K562 (cell line): ENCODE measurements at regions of chrX and their contacts with region 1.

Region 1: GRCh38 chrX:43557792-43558191 is 98.3 kb upstream of the MAOA start:
- DNase-seq: peak; percentile 38 to 62 (median 46)
- ATAC-seq: peak; percentile 66; the same call in 2 of the 3 replicates
- H3K4me3 ChIP-seq: no peak overlapping the region
- H3K27ac ChIP-seq: no peak overlapping the region
- H3K4me1 ChIP-seq: no peaks in the 10 kb centered on the region; a peak in 1 of 5 replicates
- H3K27me3 ChIP-seq: no peaks in the 10 kb centered on the region
- CTCF ChIP-seq: peak; percentile 43 to 71 (median 54); a peak in 4 of 6 replicates
- EP300 ChIP-seq: no peak
- POLR2A ChIP-seq: no peak
- RAD21 ChIP-seq: peak; percentile 67 to 76

Region 2: DNA sequence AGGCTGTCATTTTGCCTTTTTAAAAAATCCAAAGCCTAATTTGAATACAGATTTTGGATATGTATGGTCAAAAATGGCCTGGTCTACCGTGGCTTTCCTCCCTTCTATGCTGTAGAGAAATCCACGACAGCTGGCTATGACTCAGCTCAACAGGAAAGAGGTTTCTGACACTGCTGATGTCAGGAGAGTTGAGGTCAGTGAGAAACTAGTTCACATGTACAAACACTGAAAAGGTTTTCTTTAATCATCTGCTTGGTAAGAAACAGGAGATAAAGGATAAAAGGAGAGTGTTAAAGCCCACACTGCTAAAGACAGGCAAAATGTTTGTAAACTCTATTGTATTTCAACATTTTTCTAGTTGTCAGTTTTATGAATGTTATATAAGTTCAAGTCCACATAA is 1996.7 kb before region 1 on chrX:
- CTCF ChIA-PET with region 1: no interaction called
- POLR2A ChIA-PET with region 1: no interaction called
- in situ Hi-C with region 1: no loop called
- intact Hi-C with region 1: loop called (anchors 10 kb)
- DNase-seq: peak; percentile 6 to 68 (median 18)
- ATAC-seq: peak; percentile 92
- H3K4me3 ChIP-seq: no peak overlapping the region
- H3K27ac ChIP-seq: peak overlapping the region; percentile 15; the same call in 2 of the 3 replicates
- H3K4me1 ChIP-seq: peaks cover 0 to 5% of the 10 kb centered on the region in 2 experiments; a peak in 3 of 5 replicates
- H3K27me3 ChIP-seq: no peaks in the 10 kb centered on the region
- CTCF ChIP-seq: no peak
- EP300 ChIP-seq: no peak
- POLR2A ChIP-seq: no peak
- RAD21 ChIP-seq: peak in 1 of 2 experiments; percentile 2; a peak in 1 of 4 replicates

Region 3: GRCh38 chrX:43349363-43349762 is 208.4 kb before region 1 on chrX:
- CTCF ChIA-PET with region 1: interaction called, 7 read pairs
- POLR2A ChIA-PET with region 1: no interaction called
- in situ Hi-C with region 1: no loop called
- intact Hi-C with region 1: loop called (anchors 1 kb)
- DNase-seq: peak; percentile 11 to 40 (median 20)
- ATAC-seq: peak; percentile 76
- H3K4me3 ChIP-seq: no peak overlapping the region
- H3K27ac ChIP-seq: no peak overlapping the region
- H3K4me1 ChIP-seq: no peaks in the 10 kb centered on the region
- H3K27me3 ChIP-seq: no peaks in the 10 kb centered on the region
- CTCF ChIP-seq: peak; percentile 44 to 60 (median 59); a peak in 5 of 6 replicates
- EP300 ChIP-seq: no peak
- POLR2A ChIP-seq: no peak
- RAD21 ChIP-seq: peak; percentile 8 to 47; a peak in 2 of 4 replicates

Region 4: DNA sequence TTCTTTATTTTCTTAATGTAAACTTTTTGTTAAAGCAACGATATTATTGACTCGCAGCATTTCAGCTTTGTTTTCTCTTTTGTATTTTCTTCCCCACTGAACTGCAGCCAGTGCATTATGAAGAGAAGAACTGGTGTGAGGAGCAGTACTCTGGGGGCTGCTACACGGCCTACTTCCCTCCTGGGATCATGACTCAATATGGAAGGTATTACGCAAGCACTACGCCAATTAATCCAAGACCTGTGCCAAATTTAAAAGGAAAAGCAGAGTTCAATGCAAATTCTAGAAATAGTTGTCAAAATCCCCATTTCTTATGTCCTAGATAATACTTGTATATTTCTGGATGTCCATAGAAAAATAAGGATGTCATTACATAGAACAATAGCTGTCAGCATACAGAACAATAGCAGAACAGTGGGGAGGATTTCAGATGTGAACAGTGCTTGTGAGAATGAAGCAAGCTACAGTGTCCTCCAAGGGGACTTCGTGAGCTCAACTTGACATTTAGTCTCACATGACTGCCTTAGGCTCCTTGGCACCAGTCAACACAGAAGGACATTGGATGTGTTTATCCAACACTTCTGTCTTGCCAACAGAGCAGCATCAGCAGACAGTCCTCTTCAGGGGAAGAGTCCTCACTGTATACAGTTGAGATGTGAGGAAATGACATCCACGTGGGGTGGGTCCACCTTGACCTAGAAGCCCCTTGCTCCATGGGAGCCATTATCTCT is 184.2 kb after region 1 on chrX:
- CTCF ChIA-PET with region 1: no interaction called
- POLR2A ChIA-PET with region 1: no interaction called
- in situ Hi-C with region 1: loop called (anchors 10 kb)
- intact Hi-C with region 1: no loop called
- DNase-seq: no peak
- ATAC-seq: no peak
- H3K4me3 ChIP-seq: no peak overlapping the region
- H3K27ac ChIP-seq: no peak overlapping the region
- H3K4me1 ChIP-seq: no peaks in the 10 kb centered on the region
- H3K27me3 ChIP-seq: no peaks in the 10 kb centered on the region
- CTCF ChIP-seq: no peak
- EP300 ChIP-seq: no peak
- POLR2A ChIP-seq: no peak
- RAD21 ChIP-seq: no peak

Region 5: GRCh38 chrX:43939187-43939926 is 381.6 kb after region 1 on chrX:
- CTCF ChIA-PET with region 1: no interaction called
- POLR2A ChIA-PET with region 1: no interaction called
- in situ Hi-C with region 1: no loop called
- intact Hi-C with region 1: loop called (anchors 10 kb)
- DNase-seq: no peak
- ATAC-seq: no peak
- H3K4me3 ChIP-seq: no peak overlapping the region
- H3K27ac ChIP-seq: no peak overlapping the region
- H3K4me1 ChIP-seq: no peaks in the 10 kb centered on the region
- H3K27me3 ChIP-seq: no peaks in the 10 kb centered on the region
- CTCF ChIP-seq: no peak
- EP300 ChIP-seq: no peak
- POLR2A ChIP-seq: no peak
- RAD21 ChIP-seq: no peak